CD8-positive, alpha-beta T cell (primary cell): ENCODE measurements at regions of chr5 and their contacts with region 1.

Region 1: DNA sequence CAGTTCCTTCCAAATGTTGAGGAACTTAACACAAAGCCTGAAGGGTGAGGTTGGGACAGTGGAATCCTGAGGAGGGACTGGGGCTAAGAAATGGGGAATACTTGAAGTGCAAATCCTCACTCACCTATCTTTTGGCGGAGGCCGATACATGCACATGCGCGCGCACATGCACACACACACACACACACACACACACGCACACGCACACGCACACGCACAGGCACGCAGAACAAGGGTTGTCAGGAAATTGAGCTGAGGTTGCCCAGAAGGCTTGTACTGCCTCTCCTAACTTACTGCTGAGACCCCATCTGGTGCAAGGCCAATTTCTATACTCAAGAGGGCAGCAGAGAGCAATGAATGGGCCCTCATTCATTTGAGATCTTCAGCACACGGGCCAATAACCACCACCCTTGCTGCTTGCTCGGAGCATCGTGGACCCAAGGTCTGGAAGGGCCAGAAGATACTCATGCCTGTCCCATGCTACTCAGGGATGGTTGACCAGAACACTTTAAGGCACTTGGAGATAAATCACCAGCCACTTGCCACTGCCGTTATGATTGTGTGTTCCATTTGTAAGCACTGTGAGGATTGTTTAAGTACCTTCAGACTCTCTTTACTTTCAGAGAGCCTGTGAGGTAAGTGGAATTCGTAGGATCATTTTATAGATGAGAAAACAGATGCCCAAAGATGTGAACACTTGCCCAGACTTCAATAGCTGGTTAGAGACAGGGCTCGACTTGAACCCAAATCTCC is 21.5 kb downstream of the BTF3 start:
- DNase-seq: peak; percentile 40 to 87 (median 67)
- ATAC-seq: peak; percentile 99
- H3K4me3 ChIP-seq: no peak overlapping the region
- H3K4me3 Mint-ChIP-seq: peak overlapping the region; percentile 42
- H3K27ac ChIP-seq: no peak overlapping the region
- H3K27ac Mint-ChIP-seq: no peak overlapping the region
- H3K4me1 ChIP-seq: no peaks in the 10 kb centered on the region
- H3K4me1 Mint-ChIP-seq: peaks cover 7% of the 10 kb centered on the region
- H3K27me3 ChIP-seq: no peaks in the 10 kb centered on the region
- H3K27me3 Mint-ChIP-seq: no peaks in the 10 kb centered on the region
- CTCF ChIP-seq: peak; percentile 61

Region 2: DNA sequence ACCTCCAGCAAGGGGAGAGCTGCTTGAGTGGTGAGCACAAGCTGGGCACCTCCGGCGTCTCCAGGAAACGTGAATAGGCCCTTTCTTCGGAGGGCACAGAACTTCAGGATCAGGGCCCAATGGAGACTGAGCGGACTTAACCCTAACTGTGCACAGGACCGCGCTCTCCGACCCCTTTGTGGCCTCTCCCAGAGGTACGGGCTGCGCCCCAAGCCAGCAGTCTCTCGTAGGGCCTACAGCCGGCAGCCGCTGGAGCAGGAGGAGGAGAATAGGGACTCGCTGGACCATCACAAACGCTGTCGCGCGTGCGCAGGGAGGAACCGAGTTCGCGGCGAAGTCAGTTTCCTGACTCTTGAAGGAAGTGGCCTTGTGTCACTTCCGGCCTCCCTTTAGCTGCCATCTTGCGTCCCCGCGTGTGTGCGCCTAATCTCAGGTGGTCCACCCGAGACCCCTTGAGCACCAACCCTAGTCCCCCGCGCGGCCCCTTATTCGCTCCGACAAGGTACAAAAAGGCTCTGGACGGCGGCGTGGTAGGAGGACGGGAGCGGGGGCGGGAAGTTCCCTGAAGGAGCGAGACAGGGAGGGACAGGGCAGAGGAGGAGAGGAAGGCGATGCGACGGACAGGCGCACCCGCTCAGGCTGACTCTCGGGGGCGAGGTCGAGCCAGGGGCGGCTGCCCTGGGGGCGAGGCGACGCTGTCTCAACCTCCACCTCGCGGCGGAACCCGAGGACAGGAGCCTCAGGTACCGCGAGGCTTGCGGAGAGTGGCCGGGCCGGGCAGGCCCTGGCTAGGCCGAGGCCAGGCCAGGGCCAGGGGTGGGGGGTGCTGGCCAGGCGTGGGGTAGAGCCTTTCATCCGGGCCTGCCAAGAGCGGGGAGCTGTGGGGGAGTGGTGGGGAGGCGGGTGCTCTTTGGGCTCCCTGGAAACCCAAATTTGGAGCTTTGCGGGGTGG is 21.4 kb before region 1 on chr5 and contains the start of gene BTF3:
- CTCF ChIA-PET with region 1: interaction called, 5 read pairs
- POLR2A ChIA-PET with region 1: no interaction called
- intact Hi-C with region 1: loop called in 1 of 2 experiments (anchors 1 kb)
- DNase-seq: peak; percentile 77 to 97 (median 93)
- ATAC-seq: peak; percentile 89
- H3K4me3 ChIP-seq: peak within 1 kb of the TSS; percentile 95 to 96
- H3K4me3 Mint-ChIP-seq: peak within 1 kb of the TSS; percentile 97
- H3K27ac ChIP-seq: peak within 1 kb of the TSS; percentile 97 to 99
- H3K27ac Mint-ChIP-seq: peak within 1 kb of the TSS; percentile 100
- H3K4me1 ChIP-seq: peaks cover 38% of the 10 kb centered on the region
- H3K4me1 Mint-ChIP-seq: peaks cover 50% of the 10 kb centered on the region
- H3K27me3 ChIP-seq: no peaks in the 10 kb centered on the region
- H3K27me3 Mint-ChIP-seq: peaks cover 5% of the 10 kb centered on the region
- CTCF ChIP-seq: no peak
- total RNA-seq, gene BTF3: 808 to 815 TPM

Region 3: DNA sequence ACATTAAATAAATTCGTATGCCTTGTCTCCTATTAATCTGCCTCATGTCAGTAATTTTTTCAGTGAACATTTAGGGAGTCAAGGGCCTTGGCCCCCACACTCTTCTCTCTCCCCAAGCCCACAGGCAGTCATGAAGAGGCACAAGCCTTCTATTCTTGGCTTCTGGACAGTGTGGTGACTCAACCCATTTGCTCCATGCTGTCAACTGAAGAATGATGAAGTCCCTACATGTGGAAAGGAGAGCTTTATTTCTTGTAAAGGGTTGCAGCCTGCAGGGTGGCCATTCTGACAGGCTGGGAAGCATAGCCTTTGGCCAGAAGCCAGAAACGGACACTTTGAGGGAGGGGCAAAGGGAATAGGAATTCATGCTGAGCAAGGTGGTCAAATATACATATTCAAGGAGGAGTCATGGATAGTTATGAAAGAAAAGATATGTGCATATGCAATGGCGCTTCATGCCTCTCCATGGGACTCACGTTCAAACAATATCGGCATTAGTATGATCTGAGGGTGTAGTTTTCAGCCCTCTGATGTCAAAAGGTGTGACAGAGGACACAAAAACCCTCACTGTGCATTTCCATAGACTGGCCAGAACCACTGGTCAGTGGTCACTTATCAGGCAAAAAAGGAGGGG is 14.4 kb after region 1 on chr5:
- CTCF ChIA-PET with region 1: interaction called, 69 read pairs
- POLR2A ChIA-PET with region 1: interaction called, 3 read pairs
- intact Hi-C with region 1: loop called (anchors 1 kb)
- DNase-seq: no peak
- ATAC-seq: no peak
- H3K4me3 ChIP-seq: no peak overlapping the region
- H3K4me3 Mint-ChIP-seq: no peak overlapping the region
- H3K27ac ChIP-seq: no peak overlapping the region
- H3K27ac Mint-ChIP-seq: no peak overlapping the region
- H3K4me1 ChIP-seq: no peaks in the 10 kb centered on the region
- H3K4me1 Mint-ChIP-seq: no peaks in the 10 kb centered on the region
- H3K27me3 ChIP-seq: no peaks in the 10 kb centered on the region
- H3K27me3 Mint-ChIP-seq: peaks cover 32% of the 10 kb centered on the region
- CTCF ChIP-seq: no peak

Region 4: DNA sequence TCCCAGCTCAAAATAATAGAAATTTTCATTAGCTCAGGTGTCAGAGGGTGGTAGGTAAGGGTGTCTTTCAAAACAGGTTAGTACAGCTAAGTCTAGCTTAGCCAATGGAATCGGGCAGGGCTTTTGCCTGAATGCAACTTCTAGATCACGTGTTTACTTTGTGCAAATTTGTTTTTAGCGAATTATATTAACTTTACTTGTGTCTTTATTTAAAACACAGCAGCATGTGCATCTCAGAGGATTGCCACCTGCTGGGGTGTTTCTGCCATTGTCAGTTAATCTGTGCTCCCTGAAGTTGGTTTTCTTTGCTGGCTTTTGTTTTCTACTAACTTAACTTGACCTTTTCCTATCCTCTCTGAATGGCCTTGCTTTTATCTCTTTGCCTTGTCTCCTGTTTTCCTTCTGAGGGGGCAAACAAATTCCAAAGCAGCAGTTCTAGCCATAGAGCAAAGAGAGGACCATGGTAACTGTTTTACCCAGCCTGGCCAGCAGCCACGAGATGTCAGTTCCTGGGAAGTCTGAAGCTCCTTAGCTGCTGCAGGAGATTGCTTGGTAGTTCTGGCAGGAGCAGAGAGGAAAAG is 173.9 kb after region 1 on chr5:
- CTCF ChIA-PET with region 1: no interaction called
- POLR2A ChIA-PET with region 1: no interaction called
- intact Hi-C with region 1: no loop called
- DNase-seq: peak in 2 of 9 experiments; percentile 29 to 49
- ATAC-seq: no peak
- H3K4me3 ChIP-seq: no peak overlapping the region
- H3K4me3 Mint-ChIP-seq: no peak overlapping the region
- H3K27ac ChIP-seq: peak overlapping the region in 1 of 2 experiments; percentile 64
- H3K27ac Mint-ChIP-seq: peak overlapping the region; percentile 29
- H3K4me1 ChIP-seq: no peaks in the 10 kb centered on the region
- H3K4me1 Mint-ChIP-seq: peaks cover 10% of the 10 kb centered on the region
- H3K27me3 ChIP-seq: no peaks in the 10 kb centered on the region
- H3K27me3 Mint-ChIP-seq: peaks cover 4% of the 10 kb centered on the region
- CTCF ChIP-seq: no peak

Region 5: DNA sequence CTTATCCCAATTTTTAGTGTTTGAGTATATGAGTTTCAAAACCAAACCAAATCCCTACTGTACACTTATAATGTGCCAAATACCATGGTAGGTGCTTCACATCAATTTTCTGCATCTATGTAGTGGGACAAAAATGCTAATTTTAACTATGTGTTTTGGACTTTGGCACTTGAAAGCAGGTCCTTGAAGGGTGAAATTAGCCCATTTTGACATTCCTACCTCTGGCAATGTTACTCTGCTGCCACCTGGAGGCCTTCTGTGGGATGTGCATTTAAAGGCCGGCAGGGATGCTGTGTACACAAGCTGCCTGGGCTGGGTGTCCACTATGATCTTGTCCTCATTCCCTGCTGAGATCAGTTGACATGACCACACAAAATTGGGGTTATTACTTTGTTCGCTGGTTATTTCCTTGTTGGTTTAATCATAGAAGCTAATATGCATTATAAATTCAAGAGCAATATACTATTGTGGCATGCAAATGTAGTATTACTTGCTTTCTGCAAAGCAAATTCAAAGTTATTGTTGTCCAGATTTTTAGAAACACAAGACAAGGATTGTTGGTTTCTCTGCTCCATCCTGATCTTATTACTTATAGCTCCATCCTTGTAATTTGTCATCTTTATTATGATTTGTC is 273.1 kb after region 1 on chr5:
- CTCF ChIA-PET with region 1: no interaction called
- POLR2A ChIA-PET with region 1: no interaction called
- intact Hi-C with region 1: loop called in 1 of 2 experiments (anchors 2 kb)
- DNase-seq: peak; percentile 30 to 75 (median 58)
- ATAC-seq: no peak
- H3K4me3 ChIP-seq: no peak overlapping the region
- H3K4me3 Mint-ChIP-seq: no peak overlapping the region
- H3K27ac ChIP-seq: no peak overlapping the region
- H3K27ac Mint-ChIP-seq: no peak overlapping the region
- H3K4me1 ChIP-seq: no peaks in the 10 kb centered on the region
- H3K4me1 Mint-ChIP-seq: no peaks in the 10 kb centered on the region
- H3K27me3 ChIP-seq: no peaks in the 10 kb centered on the region
- H3K27me3 Mint-ChIP-seq: peaks cover 18% of the 10 kb centered on the region
- CTCF ChIP-seq: peak; percentile 80